Lower lobe of right lung (tissue), 2 donors: ENCODE measurements at regions of chr4 and their contacts with region 1.

Region 1: GRCh38 chr4:107913281-107913899 is 18.0 kb upstream of the CYP2U1 start:
- DNase-seq: no peak
- ATAC-seq: peak; percentile 89 to 91
- H3K4me3 ChIP-seq: no peak overlapping the region
- H3K27ac ChIP-seq: no peak overlapping the region
- H3K4me1 ChIP-seq: peaks cover 4% of the 10 kb centered on the region
- H3K27me3 ChIP-seq: no peaks in the 10 kb centered on the region
- CTCF ChIP-seq: peak; percentile 83

Region 2: DNA sequence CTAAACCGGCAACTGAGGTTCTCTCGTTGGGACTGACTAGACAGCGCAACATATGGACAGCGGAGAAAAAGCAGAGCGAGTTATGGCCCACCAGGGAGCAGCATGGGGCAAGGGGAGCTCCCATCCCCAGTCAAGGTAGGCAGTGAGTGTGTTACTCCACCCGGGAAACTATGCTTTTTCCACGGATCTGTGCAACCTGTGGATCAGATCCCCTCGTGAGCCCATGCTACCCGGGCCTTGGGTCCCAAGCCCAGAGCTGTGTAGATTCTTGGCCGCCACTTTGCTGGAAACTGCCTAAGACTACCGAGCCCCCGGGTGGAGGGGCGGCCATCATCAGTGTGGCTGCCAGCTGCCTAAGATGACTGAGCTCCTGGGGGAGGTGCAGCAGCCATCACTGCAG is 334.3 kb before region 1 on chr4:
- intact Hi-C with region 1: no loop called
- DNase-seq: no peak
- ATAC-seq: no peak
- H3K4me3 ChIP-seq: no peak overlapping the region
- H3K27ac ChIP-seq: no peak overlapping the region
- H3K4me1 ChIP-seq: no peaks in the 10 kb centered on the region
- H3K27me3 ChIP-seq: no peaks in the 10 kb centered on the region
- CTCF ChIP-seq: no peak

Region 3: DNA sequence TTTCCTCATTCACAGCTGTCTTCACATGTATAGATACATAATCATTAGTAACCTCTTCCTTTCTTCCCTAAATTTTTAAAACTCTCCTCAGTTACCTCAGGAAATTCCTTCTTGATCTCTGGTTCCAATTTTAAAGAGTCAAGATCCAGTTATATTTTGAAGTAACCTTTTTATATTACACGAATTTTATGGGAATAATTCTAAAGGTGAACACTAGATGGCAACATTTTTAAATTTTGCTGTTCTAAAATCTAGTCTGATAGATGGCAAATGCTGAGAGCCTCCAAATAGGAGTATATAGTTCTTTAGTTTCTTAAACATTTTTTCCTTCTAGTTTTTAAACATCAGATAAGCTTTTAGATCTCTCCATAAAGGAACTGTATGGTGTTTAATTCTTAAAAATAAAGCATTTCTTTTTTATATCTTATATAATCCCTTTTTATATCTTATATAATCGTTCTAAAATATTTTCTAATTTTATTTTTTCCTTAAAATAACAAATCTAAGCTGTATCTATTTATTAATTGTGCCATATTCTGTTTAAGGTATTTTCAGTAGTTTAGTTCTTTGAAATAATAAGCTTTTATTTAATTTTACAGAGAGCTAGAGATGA is 155.4 kb before region 1 on chr4:
- intact Hi-C with region 1: loop called (anchors 5 kb)
- DNase-seq: no peak
- ATAC-seq: peak; percentile 59 to 79
- H3K4me3 ChIP-seq: no peak overlapping the region
- H3K27ac ChIP-seq: no peak overlapping the region
- H3K4me1 ChIP-seq: no peaks in the 10 kb centered on the region
- H3K27me3 ChIP-seq: no peaks in the 10 kb centered on the region
- CTCF ChIP-seq: peak; percentile 62

Region 4: GRCh38 chr4:107824353-107825071 is 88.9 kb before region 1 on chr4 and contains the start of gene SGMS2:
- intact Hi-C with region 1: loop called (anchors 5 kb)
- DNase-seq: peak; percentile 94
- ATAC-seq: peak; percentile 81 to 93
- H3K4me3 ChIP-seq: peak within 1 kb of the TSS; percentile 80
- H3K27ac ChIP-seq: peak within 1 kb of the TSS; percentile 94
- H3K4me1 ChIP-seq: peaks cover 30% of the 10 kb centered on the region
- H3K27me3 ChIP-seq: no peaks in the 10 kb centered on the region
- CTCF ChIP-seq: no peak
- total RNA-seq, gene SGMS2: 89.0 TPM